ENCODE measurements at regions of chr7 and their contacts with region 1.

Region 1: GRCh38 chr7:101507791-101508252 is 121.3 kb downstream of the MYL10 start:
- DNase-seq: no peak
- H3K4me3 ChIP-seq: no peak overlapping the region
- H3K27me3 ChIP-seq: peaks cover 9% of the 10 kb centered on the region
- CTCF ChIP-seq: peak; percentile 83

Region 2: GRCh38 chr7:100793806-100794660 is 713.8 kb before region 1 on chr7:
- CTCF ChIA-PET with region 1: no interaction called
- POLR2A ChIA-PET with region 1: no interaction called
- DNase-seq: no peak
- H3K4me3 ChIP-seq: no peak overlapping the region
- H3K27me3 ChIP-seq: peaks cover under 1% of the 10 kb centered on the region; the same call in 1 of the 2 replicates
- CTCF ChIP-seq: no peak

Region 3: GRCh38 chr7:101519324-101520023 is 11.7 kb after region 1 on chr7:
- CTCF ChIA-PET with region 1: interaction called, 13 read pairs
- POLR2A ChIA-PET with region 1: no interaction called
- DNase-seq: peak; percentile 87
- H3K4me3 ChIP-seq: no peak overlapping the region
- H3K27me3 ChIP-seq: no peaks in the 10 kb centered on the region; the same call in 1 of the 2 replicates
- CTCF ChIP-seq: no peak

Region 4: GRCh38 chr7:101537205-101537604 is 29.4 kb after region 1 on chr7:
- CTCF ChIA-PET with region 1: interaction called, 12 read pairs
- POLR2A ChIA-PET with region 1: no interaction called
- DNase-seq: no peak
- H3K4me3 ChIP-seq: no peak overlapping the region
- H3K27me3 ChIP-seq: peaks cover 1% of the 10 kb centered on the region
- CTCF ChIP-seq: no peak

Measured in BJ (cell line).